Activated CD4-positive, alpha-beta T cell treated with anti-CD3 and anti-CD28 coated beads, Interleukin-2, amount 10 ng/mL, durations not matched to agents 7 days and 5 days (primary cell): ENCODE measurements at regions of chr17 and their contacts with region 1.

Region 1: DNA sequence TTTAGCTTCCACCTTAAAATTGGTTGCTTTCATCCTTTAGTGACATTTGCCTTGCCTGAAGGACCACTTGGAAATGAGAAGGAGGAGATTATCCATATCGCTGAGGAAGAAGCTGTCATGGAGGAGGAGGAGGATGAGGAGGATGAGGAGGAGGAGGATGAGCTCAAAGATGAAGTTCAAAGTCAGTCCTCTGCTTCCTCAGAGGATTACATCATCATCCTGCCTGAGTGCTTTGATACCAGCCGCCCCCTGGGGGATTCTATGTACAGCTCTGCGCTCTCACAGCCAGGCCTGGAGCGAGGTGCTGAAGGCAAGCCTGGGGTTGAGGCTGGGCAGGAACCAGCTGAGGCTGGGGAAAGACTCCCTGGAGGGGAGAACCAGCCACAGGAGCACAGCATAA is 11.5 kb upstream of the TMEM106A start:
- DNase-seq: no peak
- H3K4me3 Mint-ChIP-seq: no peak overlapping the region
- H3K27ac Mint-ChIP-seq: no peak overlapping the region
- H3K4me1 Mint-ChIP-seq: no peaks in the 10 kb centered on the region
- H3K27me3 Mint-ChIP-seq: no peaks in the 10 kb centered on the region

Region 2: DNA sequence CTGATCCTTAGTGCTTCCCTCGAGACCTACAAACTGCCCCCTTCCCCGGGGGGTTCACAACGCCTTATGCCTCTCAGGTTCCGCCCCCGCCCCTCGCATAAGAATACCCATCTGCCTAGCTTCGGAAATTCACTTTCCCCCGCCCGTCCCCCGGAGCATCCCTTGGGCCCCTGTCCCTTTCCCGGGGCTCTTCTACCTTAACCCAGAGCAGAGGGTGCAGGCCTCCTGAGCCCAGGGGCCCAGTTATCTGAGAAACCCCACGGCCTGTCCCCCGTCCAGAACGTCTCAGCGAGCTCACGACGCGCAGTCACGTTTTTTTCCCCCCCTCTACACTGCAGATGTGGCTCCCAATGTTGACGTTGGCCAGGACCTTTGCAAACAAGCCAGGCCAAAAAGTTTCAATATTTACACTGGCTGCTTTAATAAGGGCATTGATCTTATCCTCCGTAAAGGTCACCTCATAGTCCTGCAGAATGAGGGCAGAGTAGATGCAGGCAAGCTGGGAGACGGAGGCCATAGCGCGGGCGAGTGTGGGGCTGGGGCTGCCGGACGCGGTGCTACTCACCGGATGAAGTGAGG is 30.5 kb before region 1 on chr17:
- CTCF ChIA-PET with region 1: no interaction called
- POLR2A ChIA-PET with region 1: no interaction called
- DNase-seq: peak; percentile 12
- H3K4me3 Mint-ChIP-seq: no peak overlapping the region
- H3K27ac Mint-ChIP-seq: no peak overlapping the region
- H3K4me1 Mint-ChIP-seq: peaks cover 30% of the 10 kb centered on the region
- H3K27me3 Mint-ChIP-seq: no peaks in the 10 kb centered on the region

Region 3: DNA sequence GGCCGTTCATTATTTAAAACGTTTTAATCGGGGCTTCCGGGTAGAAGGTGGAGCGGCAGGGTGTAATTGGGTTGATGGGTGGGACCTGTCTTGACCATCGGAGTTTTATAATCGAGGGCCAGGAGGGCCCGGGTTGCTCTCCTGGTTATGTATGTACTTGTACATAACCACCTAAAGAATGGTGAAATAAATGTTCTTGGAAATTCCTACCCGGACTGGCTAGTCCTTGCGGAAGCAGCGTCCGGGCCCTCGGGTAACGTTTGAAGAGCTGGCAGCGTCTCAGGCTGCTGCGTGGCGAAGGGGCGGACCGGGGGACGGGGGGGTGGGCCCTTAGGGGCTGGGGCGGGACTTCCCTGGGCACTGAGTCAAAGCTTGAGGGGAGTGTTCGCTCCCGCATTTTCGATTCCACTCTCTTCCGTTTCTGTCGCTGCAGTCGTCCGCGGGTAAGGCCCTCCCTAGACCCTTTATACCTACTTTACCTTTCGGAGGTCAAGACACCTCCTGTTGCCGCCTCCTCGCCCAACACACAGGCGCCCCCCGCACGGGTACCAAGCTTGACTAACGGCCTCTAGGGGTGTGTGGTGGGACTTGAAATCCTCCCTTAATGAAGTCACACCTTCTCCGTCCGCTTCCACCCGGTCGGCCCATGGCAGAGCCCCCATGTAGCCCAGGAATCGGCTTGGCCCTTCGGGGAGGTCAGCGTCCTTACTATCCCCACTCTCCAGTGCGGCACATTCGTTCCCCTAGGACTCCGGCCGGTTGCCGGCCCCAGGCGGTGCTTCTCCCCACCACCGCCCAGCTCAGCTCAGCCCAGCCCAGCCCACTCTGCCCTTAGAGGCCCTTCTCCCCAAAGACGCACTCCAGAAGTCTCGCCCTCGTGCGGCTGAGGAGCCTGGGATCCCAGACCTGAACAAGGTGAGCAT is 11.6 kb after region 1 on chr17 and contains the start of gene TMEM106A:
- CTCF ChIA-PET with region 1: interaction called, 11 read pairs
- POLR2A ChIA-PET with region 1: no interaction called
- DNase-seq: peak; percentile 80
- H3K4me3 Mint-ChIP-seq: peak within 1 kb of the TSS; percentile 95
- H3K27ac Mint-ChIP-seq: peak within 1 kb of the TSS; percentile 87
- H3K4me1 Mint-ChIP-seq: peaks cover 40% of the 10 kb centered on the region
- H3K27me3 Mint-ChIP-seq: no peaks in the 10 kb centered on the region
- total RNA-seq, gene TMEM106A: 11.7 to 11.8 TPM